OCI-LY7 (cell line): ENCODE measurements at regions of chr2 and their contacts with region 1.

Region 1: DNA sequence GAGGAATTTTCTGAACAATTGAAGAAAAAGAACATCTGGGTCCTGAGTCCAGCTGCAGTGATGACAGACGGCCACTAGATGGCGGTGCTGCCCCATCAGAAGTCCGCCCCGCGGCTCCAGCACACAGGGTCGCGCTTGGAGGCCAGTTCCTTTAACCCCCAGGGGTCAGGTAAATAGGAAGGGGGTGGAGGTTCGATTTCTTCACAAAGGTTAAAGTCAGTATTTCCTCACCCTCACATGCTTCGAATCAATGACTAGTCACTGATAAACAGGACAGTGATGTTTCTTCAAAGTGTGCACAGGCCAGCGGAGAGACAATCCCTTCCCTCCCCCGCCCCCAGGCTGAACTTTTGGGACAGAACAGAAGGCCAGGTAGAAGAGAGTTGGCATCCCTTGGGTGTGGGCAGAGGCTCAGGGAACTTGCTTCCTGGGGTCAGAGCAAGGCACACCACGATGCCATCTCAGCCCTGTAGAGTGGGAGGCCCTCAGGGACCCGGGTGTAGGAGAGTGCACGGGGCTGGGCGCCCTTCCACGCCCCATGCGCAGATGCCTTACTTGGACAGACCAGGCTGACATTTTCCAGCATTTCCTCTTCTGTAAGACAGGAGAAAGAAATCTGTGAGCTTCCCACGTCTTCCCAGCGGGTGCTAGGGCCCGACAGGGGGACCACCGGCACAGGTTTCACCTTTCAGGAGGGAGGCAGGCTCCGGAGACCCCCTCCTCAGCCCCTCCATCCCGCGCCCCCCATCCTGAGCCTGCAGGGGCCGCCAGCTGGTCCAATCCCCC is 722 bp downstream of the APOB start:
- DNase-seq: peak; percentile 60
- H3K4me3 ChIP-seq: no peak overlapping the region
- H3K27ac ChIP-seq: no peak overlapping the region
- H3K4me1 ChIP-seq: no peaks in the 10 kb centered on the region
- CTCF ChIP-seq: peak; percentile 99

Region 2: GRCh38 chr2:21118302-21118920 is 75.3 kb after region 1 on chr2:
- CTCF ChIA-PET with region 1: no interaction called
- POLR2A ChIA-PET with region 1: interaction called, 4 read pairs
- intact Hi-C with region 1: loop called (anchors 1 kb)
- DNase-seq: peak; percentile 57
- H3K4me3 ChIP-seq: no peak overlapping the region
- H3K27ac ChIP-seq: no peak overlapping the region
- H3K4me1 ChIP-seq: peaks cover 7% of the 10 kb centered on the region
- CTCF ChIP-seq: peak; percentile 85

Region 3: DNA sequence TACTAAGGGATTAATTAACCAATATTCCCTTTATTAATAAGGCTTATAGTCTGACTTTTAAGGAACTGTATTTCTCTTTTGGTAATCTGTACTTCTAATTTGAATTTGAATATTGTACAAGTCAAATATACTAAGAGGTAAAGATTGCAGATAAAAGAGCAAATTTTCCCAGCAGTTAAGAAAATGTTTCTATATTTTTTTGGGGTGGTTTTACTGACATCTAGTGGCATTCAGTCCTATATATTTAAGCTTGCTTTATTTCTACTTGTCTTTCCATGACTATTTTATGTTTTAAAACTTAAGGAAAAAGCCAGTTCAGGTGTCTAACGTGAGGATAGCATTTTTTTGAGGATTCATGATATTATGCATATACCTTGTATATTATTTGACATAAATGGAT is 122.2 kb after region 1 on chr2:
- CTCF ChIA-PET with region 1: no interaction called
- POLR2A ChIA-PET with region 1: no interaction called
- intact Hi-C with region 1: loop called (anchors 1 kb)
- DNase-seq: peak; percentile 2
- H3K4me3 ChIP-seq: no peak overlapping the region
- H3K27ac ChIP-seq: no peak overlapping the region
- H3K4me1 ChIP-seq: no peaks in the 10 kb centered on the region
- CTCF ChIP-seq: peak; percentile 62

Region 4: DNA sequence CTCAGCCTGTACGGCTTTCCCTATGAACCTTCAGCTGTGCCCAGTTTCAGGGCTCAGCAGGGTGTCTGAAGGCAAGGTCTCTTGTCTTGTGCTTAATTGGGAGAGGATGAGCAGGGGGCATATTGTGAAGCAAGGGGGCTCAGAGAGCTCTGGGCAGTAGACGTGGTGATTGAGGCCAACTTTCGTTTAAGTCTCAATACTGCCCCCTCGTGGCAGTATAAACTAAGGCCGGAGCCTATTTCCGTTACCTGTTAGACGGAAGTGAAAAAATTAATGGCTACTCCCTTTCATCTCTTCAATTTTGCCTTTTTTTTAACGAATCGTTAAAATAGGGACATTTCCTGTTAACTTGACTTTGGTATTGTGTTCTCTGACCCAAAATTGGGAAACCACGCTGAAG is 274.0 kb after region 1 on chr2:
- CTCF ChIA-PET with region 1: interaction called, 3 read pairs
- POLR2A ChIA-PET with region 1: no interaction called
- intact Hi-C with region 1: loop called (anchors 2 kb)
- DNase-seq: peak; percentile 65
- H3K4me3 ChIP-seq: no peak overlapping the region
- H3K27ac ChIP-seq: no peak overlapping the region
- H3K4me1 ChIP-seq: no peaks in the 10 kb centered on the region
- CTCF ChIP-seq: peak; percentile 86